ENCODE measurements at regions of chr11 and their contacts with region 1.

Region 1: GRCh38 chr11:72030472-72031045 is 31.9 kb downstream of the IL18BP start:
- DNase-seq: no peak
- ATAC-seq: no peak
- H3K4me3 ChIP-seq: no peak overlapping the region
- H3K27ac ChIP-seq: no peak overlapping the region
- H3K4me1 ChIP-seq: peaks cover 6 to 84% (median 47%) of the 10 kb centered on the region in 12 donors
- H3K27me3 ChIP-seq: no peaks in the 10 kb centered on the region
- CTCF ChIP-seq: no peak
- POLR2A ChIP-seq: no peak

Region 2: DNA sequence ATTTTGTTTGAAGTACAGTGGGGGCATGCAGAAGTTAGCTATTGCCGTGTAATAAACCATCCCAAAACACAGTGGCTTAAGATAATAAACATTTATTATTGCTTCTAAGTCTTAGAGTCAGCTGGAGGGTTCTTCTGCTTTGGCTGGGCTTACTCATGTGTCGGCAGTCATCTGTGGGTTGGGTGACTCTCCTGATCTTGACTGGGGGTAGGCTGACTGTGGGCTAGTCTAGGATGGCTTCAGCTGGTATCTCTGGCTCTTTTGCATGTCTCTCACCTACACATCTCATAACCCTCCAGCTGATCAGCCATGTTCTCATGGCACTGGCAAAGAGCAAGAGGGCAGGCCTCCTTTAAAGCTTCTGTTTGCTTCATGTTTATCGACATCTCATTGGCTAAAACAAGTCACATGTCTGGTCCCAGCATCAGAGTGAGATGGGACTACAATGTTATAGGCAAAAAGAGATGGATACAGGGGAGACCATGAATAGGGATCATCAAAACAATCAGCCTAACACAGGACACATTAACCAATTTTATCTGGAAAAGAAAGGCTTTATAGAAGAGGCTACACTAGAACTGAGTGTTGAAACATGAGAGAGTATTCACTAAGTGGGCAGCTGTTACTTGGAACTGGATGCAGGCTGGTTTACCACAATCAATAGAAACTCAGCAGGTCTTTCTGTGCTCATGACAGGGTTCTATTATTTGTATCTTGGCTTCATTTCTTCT is 55.2 kb after region 1 on chr11:
- intact Hi-C with region 1: loop called in 3 of 10 experiments (anchors 1 to 5 kb)
- DNase-seq: no peak
- ATAC-seq: no peak
- H3K4me3 ChIP-seq: no peak overlapping the region
- H3K27ac ChIP-seq: no peak overlapping the region
- H3K4me1 ChIP-seq: peaks cover 0 to 22% (median 7%) of the 10 kb centered on the region in 12 donors
- H3K27me3 ChIP-seq: no peaks in the 10 kb centered on the region
- CTCF ChIP-seq: no peak
- POLR2A ChIP-seq: no peak

Region 3: DNA sequence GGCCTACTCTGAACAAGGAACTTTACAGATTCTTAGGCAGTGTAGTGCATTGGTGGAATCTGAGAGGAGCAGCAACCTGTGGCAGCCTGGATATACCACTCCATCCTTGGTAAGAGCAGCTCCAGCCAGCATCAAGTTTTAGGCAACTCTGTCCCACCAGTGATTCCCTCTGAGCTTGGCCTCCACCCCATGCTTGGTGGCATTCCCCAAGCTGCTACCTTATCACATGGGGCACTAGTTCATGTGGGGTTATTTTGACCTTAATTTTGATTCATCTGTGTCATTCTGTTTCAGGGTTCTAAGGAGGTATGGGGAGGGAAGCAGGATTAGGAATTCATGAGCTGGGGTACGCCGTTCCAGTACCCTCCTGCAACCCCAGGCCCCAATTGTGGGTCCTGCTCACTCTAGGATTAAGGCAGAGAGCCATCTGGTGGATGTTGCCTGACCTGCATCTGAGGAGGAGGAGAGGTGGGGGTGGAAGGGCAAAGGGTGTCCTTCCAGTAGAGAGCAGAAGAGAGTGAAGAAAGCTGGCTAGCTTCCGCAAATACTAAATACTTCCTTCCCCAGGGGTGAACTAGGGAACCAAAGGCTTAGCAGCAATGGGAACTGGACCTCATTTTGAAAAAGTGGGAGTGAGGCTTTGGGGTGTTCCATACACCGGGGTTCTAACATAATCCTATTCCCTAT is 60.6 kb after region 1 on chr11:
- intact Hi-C with region 1: loop called in 9 of 10 experiments (anchors 1 to 5 kb)
- DNase-seq: peak in 4 of 5 donors; percentile 73 to 78 (median 74)
- ATAC-seq: peak; percentile 73 to 95 (median 92)
- H3K4me3 ChIP-seq: no peak overlapping the region
- H3K27ac ChIP-seq: peak overlapping the region in 4 of 12 donors; percentile 12 to 77 (median 36)
- H3K4me1 ChIP-seq: peaks cover 0 to 25% (median 8%) of the 10 kb centered on the region in 12 donors
- H3K27me3 ChIP-seq: no peaks in the 10 kb centered on the region
- CTCF ChIP-seq: peak; percentile 79 to 92 (median 84)
- POLR2A ChIP-seq: no peak

Region 4: DNA sequence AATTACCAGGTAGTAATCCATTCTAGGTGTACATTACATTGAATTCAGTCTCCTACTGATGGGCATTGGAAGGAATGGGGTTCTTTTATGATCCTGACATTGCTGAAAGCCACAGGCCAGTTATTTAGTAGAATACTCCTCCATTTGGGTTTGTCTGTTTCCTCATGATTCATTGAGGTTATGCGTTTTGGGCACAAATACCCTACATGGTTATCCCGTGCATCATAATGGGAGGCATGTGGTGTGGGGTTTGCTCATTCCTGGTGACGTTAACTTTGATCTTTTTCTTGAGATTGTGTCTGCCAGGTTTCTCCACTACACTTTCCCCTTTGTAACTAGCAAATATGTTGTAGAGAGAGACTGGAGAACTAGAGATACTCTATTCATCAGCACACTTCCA is 110.5 kb after region 1 on chr11:
- intact Hi-C with region 1: loop called in 5 of 10 experiments (anchors 2 to 5 kb)
- DNase-seq: no peak
- ATAC-seq: no peak
- H3K4me3 ChIP-seq: no peak overlapping the region
- H3K27ac ChIP-seq: no peak overlapping the region
- H3K4me1 ChIP-seq: peaks cover 0 to 5% (median 0%) of the 10 kb centered on the region in 12 donors
- H3K27me3 ChIP-seq: no peaks in the 10 kb centered on the region
- CTCF ChIP-seq: no peak
- POLR2A ChIP-seq: no peak

Measured in heart left ventricle (tissue), 16 donors.